CD14-positive monocyte (primary cell): ENCODE measurements at regions of chr13 and their contacts with region 1.

Region 1: GRCh38 chr13:51832471-51833152 is 12.4 kb downstream of the TMEM272 start:
- DNase-seq: peak; percentile 52 to 68 (median 65)
- H3K4me3 ChIP-seq: no peak overlapping the region
- H3K4me3 Mint-ChIP-seq: peak overlapping the region in 1 of 2 donors; percentile 39
- H3K27ac ChIP-seq: peak overlapping the region in 1 of 2 donors; percentile 3
- H3K27ac Mint-ChIP-seq: peak overlapping the region in 5 of 7 donors; percentile 41 to 69 (median 61)
- H3K4me1 ChIP-seq: peaks cover 42 to 48% of the 10 kb centered on the region in 2 donors
- H3K4me1 Mint-ChIP-seq: peaks cover 64% of the 10 kb centered on the region
- H3K27me3 ChIP-seq: no peaks in the 10 kb centered on the region
- H3K27me3 Mint-ChIP-seq: peaks cover 0 to 3% (median 0%) of the 10 kb centered on the region in 3 donors
- CTCF ChIP-seq: peak; percentile 72

Region 2: DNA sequence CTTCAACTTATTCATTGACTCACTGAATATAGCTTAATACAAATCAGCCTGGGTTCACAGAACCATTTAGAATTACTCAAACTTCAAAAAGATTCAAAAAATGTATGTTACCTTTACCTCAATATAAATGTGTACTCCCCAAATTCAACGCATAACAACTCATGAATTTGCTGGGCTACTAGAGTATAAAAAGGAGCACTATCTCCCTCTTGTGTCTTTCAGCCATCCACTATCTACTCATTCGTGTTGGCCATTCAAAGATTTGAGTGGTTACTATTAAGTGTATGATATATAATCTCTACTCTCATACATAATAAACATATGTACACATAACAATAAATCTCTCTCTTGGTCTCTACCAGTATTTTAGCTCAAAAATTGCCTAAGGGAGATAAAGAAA is 400.0 kb before region 1 on chr13:
- intact Hi-C with region 1: loop called in 1 of 2 experiments (anchors 5 kb)
- DNase-seq: no peak
- H3K4me3 ChIP-seq: no peak overlapping the region
- H3K4me3 Mint-ChIP-seq: no peak overlapping the region
- H3K27ac ChIP-seq: no peak overlapping the region
- H3K27ac Mint-ChIP-seq: no peak overlapping the region
- H3K4me1 ChIP-seq: no peaks in the 10 kb centered on the region
- H3K4me1 Mint-ChIP-seq: no peaks in the 10 kb centered on the region
- H3K27me3 ChIP-seq: no peaks in the 10 kb centered on the region
- H3K27me3 Mint-ChIP-seq: no peaks in the 10 kb centered on the region
- CTCF ChIP-seq: no peak

Region 3: DNA sequence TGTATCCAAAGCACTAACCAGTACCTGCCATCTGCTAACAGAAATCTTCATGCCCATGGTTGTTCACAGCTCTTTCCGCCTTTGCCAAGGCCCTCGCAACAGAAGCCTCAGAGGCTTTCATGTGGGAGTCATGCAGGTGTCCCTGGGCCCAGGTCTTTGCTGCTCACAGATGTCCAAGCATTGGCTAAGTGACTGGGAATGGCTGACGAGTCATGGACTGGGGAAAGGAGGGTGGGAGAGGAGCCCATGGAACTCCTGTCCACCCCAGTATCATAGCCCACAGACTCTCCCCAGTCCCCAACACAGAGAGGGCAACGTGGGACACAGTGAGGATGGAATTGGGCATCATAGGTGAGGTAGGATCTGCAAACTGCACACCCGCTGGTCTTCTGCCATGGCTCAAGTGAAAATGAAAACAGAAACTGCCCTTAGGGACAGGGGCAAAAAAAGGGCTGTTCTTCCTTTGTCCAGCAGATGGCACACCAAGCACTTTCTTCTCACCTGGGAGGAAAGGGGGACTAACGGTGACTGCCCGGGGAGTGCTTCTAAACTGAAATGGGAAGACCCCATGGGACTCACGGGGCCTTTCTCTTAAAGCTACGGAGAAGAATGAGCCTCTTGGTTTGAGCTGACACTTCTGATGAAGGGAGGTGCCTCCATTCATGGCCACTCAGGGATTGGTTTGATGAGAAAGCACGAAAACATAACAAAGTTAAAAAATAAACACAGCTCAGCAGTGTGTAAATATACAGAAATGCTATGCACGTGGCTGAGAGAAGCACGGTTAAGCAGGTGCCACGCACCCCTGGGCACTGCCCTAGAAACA is 17.6 kb before region 1 on chr13:
- intact Hi-C with region 1: loop called in 1 of 2 experiments (anchors 2 kb)
- DNase-seq: peak; percentile 60 to 77 (median 71)
- H3K4me3 ChIP-seq: peak overlapping the region; percentile 8 to 68 (median 40)
- H3K4me3 Mint-ChIP-seq: peak overlapping the region; percentile 73 to 90
- H3K27ac ChIP-seq: peak overlapping the region in 1 of 2 donors; percentile 79
- H3K27ac Mint-ChIP-seq: peak overlapping the region; percentile 66 to 94 (median 82)
- H3K4me1 ChIP-seq: peaks cover 41 to 51% of the 10 kb centered on the region in 2 donors
- H3K4me1 Mint-ChIP-seq: peaks cover 64% of the 10 kb centered on the region
- H3K27me3 ChIP-seq: no peaks in the 10 kb centered on the region
- H3K27me3 Mint-ChIP-seq: peaks cover 0 to 3% (median 2%) of the 10 kb centered on the region in 3 donors
- CTCF ChIP-seq: peak; percentile 93